ENCODE measurements at regions of chr9 and their contacts with region 1.

Region 1: DNA sequence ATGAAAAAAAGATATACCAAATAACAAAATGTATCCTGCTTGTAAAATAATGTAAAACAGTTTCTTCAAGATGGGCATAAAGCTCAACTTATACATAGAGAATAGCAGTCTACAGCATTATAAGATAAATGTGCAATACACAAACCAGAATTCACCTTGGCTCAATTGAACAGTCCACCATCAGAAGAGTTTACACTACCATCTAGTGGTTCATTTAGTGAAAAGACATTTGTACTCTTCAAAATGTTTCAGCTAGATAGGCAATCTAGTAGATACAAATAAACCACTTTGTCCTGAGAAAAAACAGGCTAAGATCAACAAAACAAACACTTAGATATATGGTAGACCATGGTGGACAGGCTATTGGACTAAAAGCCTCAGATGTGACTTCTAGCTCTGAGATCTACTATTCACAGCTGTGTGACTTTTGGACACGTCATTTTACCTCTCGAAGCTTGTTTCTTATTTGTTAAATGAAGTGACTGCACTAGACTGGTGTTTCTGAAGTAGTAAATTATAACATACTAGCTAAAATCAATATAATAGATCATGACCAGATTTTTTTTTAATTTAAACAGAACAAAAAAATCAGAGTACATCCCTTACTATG is 22.1 kb upstream of the TPD52L3 start:
- DNase-seq: peak; percentile 16

Region 2: GRCh38 chr9:6197330-6197729 is 108.7 kb before region 1 on chr9:
- CTCF ChIA-PET with region 1: interaction called, 11 read pairs
- POLR2A ChIA-PET with region 1: no interaction called
- DNase-seq: peak; percentile 28

Region 3: DNA sequence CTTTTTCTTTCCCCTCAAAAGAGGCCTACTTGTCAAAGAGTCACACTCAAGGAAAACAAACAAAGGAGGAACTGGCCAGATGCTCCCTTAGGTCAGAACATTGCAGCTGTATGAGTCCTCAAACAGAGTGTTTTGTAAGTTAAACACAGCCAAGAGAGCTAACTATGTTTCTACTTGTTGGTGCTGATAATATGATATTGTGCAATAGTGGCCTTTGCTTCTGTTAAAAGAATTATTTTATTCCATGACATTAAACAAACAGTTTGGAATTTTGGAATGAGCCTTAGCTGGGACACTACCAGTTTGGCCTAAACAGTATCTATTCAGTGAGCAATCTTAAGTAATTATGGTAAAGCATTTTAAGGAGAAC is 33.8 kb before region 1 on chr9:
- CTCF ChIA-PET with region 1: no interaction called
- POLR2A ChIA-PET with region 1: no interaction called
- DNase-seq: no peak

Measured in HEK293T (cell line).